ENCODE measurements at regions of chr16 and their contacts with region 1.

Region 1: GRCh38 chr16:27066668-27067537 is at the start of gene C16orf82:
- DNase-seq: no peak
- H3K4me3 ChIP-seq: no peak within 1 kb of the TSS
- CTCF ChIP-seq: no peak
- POLR2A ChIP-seq: no peak
- total RNA-seq, gene C16orf82: not detected

Region 2: DNA sequence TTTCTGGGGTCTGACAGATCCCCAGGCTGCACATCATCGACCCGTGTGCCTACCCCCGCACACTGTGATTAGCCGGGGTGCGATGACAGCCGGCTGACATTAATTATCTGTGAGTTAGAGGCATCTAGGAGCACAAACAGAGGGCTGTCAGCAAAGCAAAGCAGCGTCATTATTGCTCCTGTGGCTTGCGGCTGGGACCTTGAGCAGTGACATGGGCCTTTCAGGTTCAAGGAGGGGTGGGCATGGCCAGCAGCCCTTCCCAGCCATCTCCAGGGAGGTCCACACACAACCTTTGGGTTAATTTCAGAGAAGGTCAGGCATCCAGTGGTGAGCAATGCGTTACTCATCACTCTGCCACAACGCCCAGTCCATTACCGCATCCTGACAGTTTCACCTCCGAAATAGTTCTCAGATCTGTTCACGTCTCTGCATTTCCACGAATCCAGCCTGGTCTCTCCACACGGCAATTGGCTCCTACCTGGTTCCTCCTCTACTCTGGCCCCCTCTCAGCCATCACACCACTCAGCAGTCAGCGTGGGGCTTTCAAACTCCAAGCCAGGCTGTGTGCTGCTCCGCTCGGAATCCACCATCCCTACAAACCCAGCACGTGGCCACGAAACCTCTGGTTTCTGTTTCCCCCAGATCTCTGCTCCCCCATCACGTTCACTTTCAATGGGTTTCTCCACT is 249.9 kb before region 1 on chr16:
- intact Hi-C with region 1: loop called (anchors 10 kb)
- DNase-seq: no peak
- H3K4me3 ChIP-seq: no peak overlapping the region
- CTCF ChIP-seq: no peak
- POLR2A ChIP-seq: no peak